ENCODE measurements at regions of chr3 and their contacts with region 1.

Region 1: GRCh38 chr3:33063651-33064051 is 33.3 kb downstream of the GLB1 start:
- DNase-seq: peak; percentile 92
- ATAC-seq: peak; percentile 78
- H3K4me3 Mint-ChIP-seq: peak overlapping the region; percentile 24
- H3K27ac Mint-ChIP-seq: peak overlapping the region; percentile 93
- H3K4me1 Mint-ChIP-seq: peaks cover 63% of the 10 kb centered on the region
- H3K27me3 Mint-ChIP-seq: no peaks in the 10 kb centered on the region
- CTCF ChIP-seq: no peak

Region 2: GRCh38 chr3:33001889-33002288 is 61.8 kb before region 1 on chr3:
- CTCF ChIA-PET with region 1: no interaction called
- POLR2A ChIA-PET with region 1: interaction called, 8 read pairs
- intact Hi-C with region 1: loop called (anchors 5 kb)
- DNase-seq: peak; percentile 62
- ATAC-seq: peak; percentile 41
- H3K4me3 Mint-ChIP-seq: no peak overlapping the region
- H3K27ac Mint-ChIP-seq: no peak overlapping the region
- H3K4me1 Mint-ChIP-seq: peaks cover 59% of the 10 kb centered on the region
- H3K27me3 Mint-ChIP-seq: no peaks in the 10 kb centered on the region
- CTCF ChIP-seq: no peak

Region 3: GRCh38 chr3:33023172-33024136 is 40.2 kb before region 1 on chr3:
- CTCF ChIA-PET with region 1: no interaction called
- POLR2A ChIA-PET with region 1: interaction called, 9 read pairs
- intact Hi-C with region 1: loop called (anchors 5 kb)
- DNase-seq: peak; percentile 33
- ATAC-seq: peak; percentile 86
- H3K4me3 Mint-ChIP-seq: peak overlapping the region; percentile 38
- H3K27ac Mint-ChIP-seq: peak overlapping the region; percentile 95
- H3K4me1 Mint-ChIP-seq: peaks cover 49% of the 10 kb centered on the region
- H3K27me3 Mint-ChIP-seq: no peaks in the 10 kb centered on the region
- CTCF ChIP-seq: peak; percentile 32

Region 4: DNA sequence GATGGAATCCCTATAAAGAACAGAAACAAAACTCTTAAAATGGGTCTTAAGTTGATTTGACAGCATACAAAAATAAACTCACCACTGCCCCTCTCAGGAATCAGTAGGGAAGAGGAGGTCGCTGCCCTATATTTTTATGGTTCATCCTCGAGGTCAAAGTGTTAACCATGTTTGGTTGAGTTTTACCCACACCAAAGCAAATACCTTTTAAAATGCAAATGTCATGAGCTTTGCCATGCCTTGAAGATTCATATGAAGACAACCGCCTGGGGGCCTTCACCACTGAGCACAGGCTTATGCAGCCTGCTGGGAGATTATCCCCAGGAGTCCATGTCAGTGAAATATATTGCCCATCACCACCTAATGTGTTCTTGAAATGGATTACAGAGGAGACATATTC is 32.8 kb before region 1 on chr3:
- CTCF ChIA-PET with region 1: interaction called, 43 read pairs
- POLR2A ChIA-PET with region 1: interaction called, 4 read pairs
- intact Hi-C with region 1: no loop called
- DNase-seq: peak; percentile 84
- ATAC-seq: peak; percentile 92
- H3K4me3 Mint-ChIP-seq: no peak overlapping the region
- H3K27ac Mint-ChIP-seq: no peak overlapping the region
- H3K4me1 Mint-ChIP-seq: peaks cover 23% of the 10 kb centered on the region
- H3K27me3 Mint-ChIP-seq: no peaks in the 10 kb centered on the region
- CTCF ChIP-seq: peak; percentile 36

Region 5: DNA sequence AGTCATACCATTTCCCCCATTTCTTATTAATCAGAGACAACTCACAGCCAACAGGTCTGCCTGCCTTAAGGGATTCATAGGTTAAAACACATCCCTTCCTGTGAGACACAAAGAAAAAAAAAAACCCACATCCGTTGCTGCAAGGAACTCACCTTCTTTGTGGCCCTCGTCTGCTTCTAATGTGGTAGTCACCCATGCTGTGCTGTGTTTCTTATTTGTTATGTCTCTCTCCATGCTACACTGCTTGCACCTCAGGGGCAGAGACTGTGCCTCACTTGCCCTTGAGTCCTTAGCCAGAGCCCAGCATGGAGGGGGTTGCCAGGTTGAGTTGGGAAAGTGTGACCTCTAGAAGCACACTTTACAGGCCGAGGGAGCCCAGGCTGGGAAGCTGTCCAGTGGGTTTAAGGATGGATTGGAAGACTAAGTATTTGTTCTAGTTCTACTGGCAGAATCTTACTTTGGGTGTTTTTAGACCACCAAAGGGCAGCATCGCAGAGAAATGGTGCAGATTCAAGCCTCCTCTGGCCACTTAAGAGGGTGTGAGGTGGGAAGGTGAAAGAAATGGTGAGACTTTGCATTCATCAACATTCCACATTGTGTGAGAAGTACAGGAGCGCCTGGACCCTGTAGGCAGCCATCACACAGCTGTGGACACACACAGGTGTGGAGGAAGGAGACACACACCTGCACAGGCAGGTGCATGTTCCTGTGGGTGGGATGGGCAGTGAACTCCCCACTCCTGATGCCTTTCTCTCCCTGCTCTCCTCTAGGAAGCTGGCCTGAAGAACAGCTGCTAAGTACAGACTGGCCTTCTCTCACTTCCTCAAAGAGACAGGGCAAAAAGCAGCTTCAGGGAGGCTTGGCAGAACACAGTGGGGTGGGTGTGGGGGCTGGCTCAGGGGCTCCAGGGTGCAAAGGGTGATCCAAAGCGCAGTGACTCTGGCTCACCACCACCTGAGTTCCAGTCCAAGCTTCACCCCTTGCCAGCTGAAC is 15.5 kb before region 1 on chr3:
- CTCF ChIA-PET with region 1: interaction called, 25 read pairs
- POLR2A ChIA-PET with region 1: interaction called, 27 read pairs
- intact Hi-C with region 1: loop called (anchors 2 kb)
- DNase-seq: peak; percentile 74
- ATAC-seq: peak; percentile 86
- H3K4me3 Mint-ChIP-seq: peak overlapping the region; percentile 21
- H3K27ac Mint-ChIP-seq: peak overlapping the region; percentile 93
- H3K4me1 Mint-ChIP-seq: peaks cover 66% of the 10 kb centered on the region
- H3K27me3 Mint-ChIP-seq: no peaks in the 10 kb centered on the region
- CTCF ChIP-seq: no peak

Measured in activated CD8-positive, alpha-beta T cell treated with anti-CD3 and anti-CD28 coated beads for 36 hours (primary cell).